Heart right ventricle (tissue), 16 donors: ENCODE measurements at regions of chr20 and their contacts with region 1.

Region 1: GRCh38 chr20:49768204-49769047 is 44.2 kb upstream of the SLC9A8 start:
- DNase-seq: peak in 1 of 2 donors; percentile 44
- ATAC-seq: peak; percentile 50 to 80 (median 70)
- H3K4me3 ChIP-seq: peak overlapping the region in 1 of 10 donors; percentile 10
- H3K27ac ChIP-seq: peak overlapping the region; percentile 37 to 86 (median 60)
- H3K4me1 ChIP-seq: peaks cover 0 to 97% (median 42%) of the 10 kb centered on the region in 9 donors
- H3K27me3 ChIP-seq: no peaks in the 10 kb centered on the region
- CTCF ChIP-seq: no peak

Region 2: DNA sequence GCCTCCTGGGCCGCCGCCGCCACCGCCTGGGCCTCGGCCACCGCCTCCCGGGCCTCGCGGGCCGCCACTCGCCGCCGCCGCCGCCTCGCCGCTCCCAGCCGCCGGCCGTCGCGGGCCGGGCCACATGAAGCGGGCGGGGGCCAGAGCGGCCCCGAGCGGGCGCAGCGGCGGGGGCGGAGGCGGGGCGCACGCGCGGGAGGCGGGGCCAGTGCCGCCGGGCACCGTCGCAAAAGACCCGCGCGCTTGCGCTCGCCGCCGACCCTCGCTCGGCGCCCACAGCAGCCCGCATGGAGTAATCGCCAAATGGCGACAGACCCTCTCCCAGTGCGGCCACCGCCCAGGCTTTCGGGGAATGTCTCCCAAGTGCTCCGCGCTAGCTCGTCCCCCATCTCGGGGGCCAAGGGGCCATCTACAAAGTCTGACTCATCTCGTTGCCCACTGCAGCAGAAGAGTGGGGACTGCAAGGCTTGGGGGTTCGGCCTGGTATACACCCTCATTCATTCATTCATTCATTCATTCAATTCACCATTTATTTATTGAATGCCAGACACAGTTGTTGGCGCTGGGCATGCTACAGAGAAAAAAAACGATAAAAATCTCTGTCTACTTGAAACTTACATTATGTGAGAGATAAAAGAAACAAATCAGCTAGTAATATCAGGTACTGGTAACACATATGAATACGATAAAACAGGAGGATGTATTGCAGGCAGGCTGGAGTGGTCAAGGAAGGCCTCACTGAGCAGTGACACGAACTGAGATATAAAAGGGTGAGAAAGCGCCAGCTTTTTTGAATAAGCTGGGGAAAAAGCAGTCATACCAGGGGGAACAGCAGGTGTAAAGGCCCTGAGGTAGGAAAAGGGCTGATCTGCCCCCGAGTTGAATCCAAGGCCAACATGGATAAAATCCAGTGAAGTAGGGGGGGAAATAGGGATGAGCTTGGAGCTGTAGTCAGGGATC is 54.4 kb before region 1 on chr20 and contains the start of gene B4GALT5:
- intact Hi-C with region 1: no loop called
- DNase-seq: peak; percentile 72 to 76
- ATAC-seq: peak; percentile 82 to 93 (median 89)
- H3K4me3 ChIP-seq: peak within 1 kb of the TSS; percentile 79 to 99 (median 98)
- H3K27ac ChIP-seq: peak within 1 kb of the TSS; percentile 88 to 99 (median 96)
- H3K4me1 ChIP-seq: peaks cover 0 to 55% (median 42%) of the 10 kb centered on the region in 9 donors
- H3K27me3 ChIP-seq: no peaks in the 10 kb centered on the region
- CTCF ChIP-seq: no peak
- total RNA-seq, gene B4GALT5: 24.4 to 61.6 (median 34.3) TPM

Region 3: DNA sequence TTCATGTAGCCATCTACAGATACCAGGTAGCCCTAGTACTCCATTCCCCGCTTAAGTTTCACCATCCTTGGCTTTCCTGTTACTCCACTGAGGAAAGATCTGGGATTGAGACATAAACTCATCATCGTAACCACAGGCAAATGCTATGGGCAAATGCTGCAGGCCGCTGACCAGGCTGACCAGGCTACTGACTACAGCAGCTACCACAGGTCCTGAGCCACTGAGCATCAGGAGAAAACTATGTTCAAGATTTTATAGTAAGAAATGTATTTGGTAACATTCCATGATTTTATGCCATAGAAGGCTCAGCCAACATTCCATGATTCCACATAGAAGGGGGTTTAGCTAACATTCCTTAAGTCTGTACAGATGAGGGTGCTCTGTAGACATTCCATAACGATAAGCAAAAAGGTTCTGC is 38.7 kb before region 1 on chr20:
- intact Hi-C with region 1: loop called in 1 of 10 experiments (anchors 2 kb)
- DNase-seq: no peak
- ATAC-seq: no peak
- H3K4me3 ChIP-seq: no peak overlapping the region
- H3K27ac ChIP-seq: no peak overlapping the region
- H3K4me1 ChIP-seq: peaks cover 0 to 28% (median 8%) of the 10 kb centered on the region in 9 donors
- H3K27me3 ChIP-seq: no peaks in the 10 kb centered on the region
- CTCF ChIP-seq: peak in 1 of 9 donors; percentile 5

Region 4: GRCh38 chr20:49948809-49949548 is 180.6 kb after region 1 on chr20:
- intact Hi-C with region 1: no loop called
- DNase-seq: no peak
- ATAC-seq: no peak
- H3K4me3 ChIP-seq: no peak overlapping the region
- H3K27ac ChIP-seq: no peak overlapping the region
- H3K4me1 ChIP-seq: peaks cover 0 to 16% (median 0%) of the 10 kb centered on the region in 9 donors
- H3K27me3 ChIP-seq: no peaks in the 10 kb centered on the region
- CTCF ChIP-seq: no peak